Activated T-helper 1 cell treated with anti-CD3 and anti-CD28 coated beads, Interleukin-12 subunit alpha, Interleukin-12 subunit beta, Interleukin-2, Interleukin-4 antibody, amounts not matched to agents 30 ng/mL and 10 ng/mL and 1 ng/mL, durations not matched to agents 14 hours and 24 hours and 36 hours (primary cell): ENCODE measurements at regions of chr19 and their contacts with region 1.

Region 1: DNA sequence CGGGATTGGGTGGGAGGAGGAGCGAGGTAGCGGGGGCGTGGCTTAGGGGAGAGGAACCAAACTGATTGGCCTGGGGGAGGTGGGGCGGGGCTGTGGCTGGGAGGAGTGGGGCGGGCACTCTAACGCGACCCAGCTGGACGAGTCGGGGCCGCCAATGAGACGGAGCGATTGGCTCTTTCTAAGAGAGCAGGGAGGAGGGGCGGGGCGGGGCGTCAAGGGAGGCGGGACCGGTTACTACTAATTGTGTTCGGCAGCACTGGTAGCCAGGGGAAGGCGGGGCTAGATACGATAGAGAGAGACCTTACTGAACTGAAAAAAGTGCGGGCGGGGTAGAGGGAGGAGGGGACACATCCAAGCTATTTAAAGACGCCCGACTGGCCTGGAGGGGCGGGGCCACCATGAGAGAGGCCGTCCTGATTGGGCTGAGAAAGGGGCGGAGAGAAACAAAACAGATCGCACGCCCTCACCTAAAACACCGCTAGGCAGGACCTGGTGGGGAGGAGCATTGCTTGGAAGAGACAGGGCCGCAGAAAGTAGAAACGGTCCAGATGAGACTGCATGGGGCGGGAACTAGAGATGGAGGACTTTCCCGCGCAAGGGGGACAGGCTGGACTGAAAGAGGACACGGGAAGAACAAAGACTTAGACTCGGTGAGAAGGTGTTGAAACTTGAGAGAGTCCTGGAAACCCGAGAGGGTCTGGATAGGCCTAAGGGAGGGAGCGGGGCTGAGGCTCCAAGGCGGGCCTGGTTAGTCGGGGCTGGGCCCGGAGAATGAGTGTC is at the start of gene KCNC3:
- DNase-seq: peak; percentile 96
- H3K4me3 Mint-ChIP-seq: peak within 1 kb of the TSS; percentile 84
- H3K27ac Mint-ChIP-seq: peak within 1 kb of the TSS; percentile 89
- H3K4me1 Mint-ChIP-seq: peaks cover 72% of the 10 kb centered on the region
- H3K27me3 Mint-ChIP-seq: peaks cover 16% of the 10 kb centered on the region
- total RNA-seq, gene KCNC3: 23.7 and 24.0 TPM in 2 replicates

Region 2: DNA sequence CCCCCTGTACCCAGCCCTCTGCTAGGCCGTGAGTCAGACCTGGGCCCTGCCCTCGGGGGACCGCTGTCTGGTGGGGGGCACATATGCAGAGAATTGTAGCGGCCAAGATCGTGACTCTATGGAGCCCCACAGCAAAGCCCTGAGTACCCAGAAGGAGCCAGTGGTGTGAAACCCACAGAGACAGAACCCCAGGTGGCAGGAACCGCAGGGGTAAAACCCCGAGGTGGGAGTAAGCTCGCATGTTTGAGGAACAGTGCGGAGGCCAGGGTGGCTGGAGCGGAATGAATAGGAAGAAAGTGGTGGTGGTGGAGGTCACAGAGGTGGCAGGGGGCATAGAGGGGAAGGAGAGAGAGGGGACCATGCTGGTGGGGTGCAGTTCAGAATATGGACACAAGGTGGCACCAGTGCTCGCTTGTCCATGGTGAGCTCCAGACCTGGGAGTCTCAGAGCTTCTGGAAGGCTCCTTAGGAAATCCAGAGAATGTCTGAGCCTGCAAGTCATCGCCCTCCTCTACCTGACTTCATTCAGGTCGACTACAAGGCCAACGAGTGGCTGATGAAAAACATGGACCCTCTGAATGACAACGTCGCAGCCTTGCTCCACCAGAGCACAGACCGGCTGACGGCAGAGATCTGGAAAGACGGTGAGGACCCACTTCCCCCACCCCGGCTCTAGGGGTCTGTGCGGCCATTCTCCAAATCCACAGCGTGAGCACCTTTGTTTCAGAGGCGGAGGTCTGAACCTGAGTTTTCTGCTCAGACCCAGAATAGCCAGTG is 77.0 kb before region 1 on chr19:
- intact Hi-C with region 1: loop called (anchors 5 kb)
- DNase-seq: no peak
- H3K4me3 Mint-ChIP-seq: no peak overlapping the region
- H3K27ac Mint-ChIP-seq: no peak overlapping the region
- H3K4me1 Mint-ChIP-seq: no peaks in the 10 kb centered on the region
- H3K27me3 Mint-ChIP-seq: no peaks in the 10 kb centered on the region

Region 3: GRCh38 chr19:50357178-50358100 is 28.1 kb after region 1 on chr19:
- intact Hi-C with region 1: loop called (anchors 1 kb)
- DNase-seq: peak; percentile 86
- H3K4me3 Mint-ChIP-seq: peak overlapping the region; percentile 90
- H3K27ac Mint-ChIP-seq: peak overlapping the region; percentile 99
- H3K4me1 Mint-ChIP-seq: peaks cover 52% of the 10 kb centered on the region
- H3K27me3 Mint-ChIP-seq: no peaks in the 10 kb centered on the region

Region 4: DNA sequence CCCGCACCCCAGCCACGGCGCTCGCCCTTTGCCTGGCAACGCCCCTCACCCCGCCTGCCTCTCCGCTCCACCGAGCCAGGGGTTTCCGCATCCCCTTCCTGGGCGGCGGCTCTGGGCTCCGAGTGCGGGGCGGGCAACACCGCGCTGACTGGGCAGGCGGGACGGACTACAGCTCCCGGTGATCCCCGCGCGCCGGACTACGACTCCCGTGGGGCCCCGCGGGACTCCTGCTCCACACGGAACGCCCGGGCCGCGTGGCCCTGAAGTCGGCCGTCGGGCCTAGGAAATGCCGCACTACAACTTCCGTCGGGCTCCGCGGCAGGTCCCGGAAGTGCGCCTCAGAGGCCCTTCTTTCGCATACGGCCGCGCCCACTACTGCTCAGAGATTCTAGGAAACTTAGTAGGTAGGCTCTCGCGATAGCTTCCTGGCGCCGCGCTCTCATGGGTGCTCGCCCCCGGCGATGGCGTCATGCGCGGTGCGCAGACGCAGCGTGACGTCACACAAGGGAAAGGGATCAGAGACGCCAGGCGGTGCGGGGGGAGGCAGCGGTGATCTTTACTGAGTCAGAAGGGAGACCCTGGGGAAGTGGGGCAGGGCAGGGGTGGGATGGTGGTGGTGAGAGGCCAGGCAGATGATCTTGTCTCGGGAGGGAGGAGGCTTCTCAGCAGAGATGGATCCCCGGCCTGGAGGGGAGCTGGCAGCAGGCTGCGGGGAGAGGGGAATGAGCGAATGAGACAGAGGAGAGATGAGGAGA is 181.9 kb after region 1 on chr19 and contains the start of gene JOSD2:
- intact Hi-C with region 1: loop called (anchors 1 kb)
- DNase-seq: peak; percentile 97
- H3K4me3 Mint-ChIP-seq: peak within 1 kb of the TSS; percentile 96
- H3K27ac Mint-ChIP-seq: peak within 1 kb of the TSS; percentile 99
- H3K4me1 Mint-ChIP-seq: peaks cover 18% of the 10 kb centered on the region
- H3K27me3 Mint-ChIP-seq: peaks cover 10% of the 10 kb centered on the region
- total RNA-seq, gene JOSD2: 38.5 and 41.7 TPM in 2 replicates

Region 5: DNA sequence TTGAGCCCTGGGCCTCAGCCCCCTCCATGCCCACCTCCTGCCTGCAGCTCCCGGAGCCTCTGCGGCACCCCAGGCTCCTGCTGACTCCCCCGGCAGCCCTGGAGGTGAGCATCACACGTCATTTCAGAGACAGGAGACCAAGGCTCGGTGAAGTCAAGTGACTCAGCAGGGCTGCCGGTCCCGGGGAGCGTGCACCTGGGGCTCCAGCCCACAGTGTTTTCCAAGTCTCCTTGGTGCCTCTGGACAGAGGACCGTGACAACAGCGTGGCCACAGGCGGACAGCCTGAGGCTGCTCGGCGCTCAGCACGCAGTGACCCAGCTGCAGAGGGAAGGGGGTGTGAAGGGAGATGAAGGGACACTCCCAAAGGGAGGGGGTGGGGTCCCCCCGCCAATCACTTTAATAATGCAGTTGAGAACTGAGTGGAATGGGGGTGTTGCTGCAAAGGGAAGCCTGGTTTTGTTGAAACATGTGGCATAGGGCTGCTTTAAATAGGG is 201.8 kb after region 1 on chr19:
- intact Hi-C with region 1: no loop called
- DNase-seq: no peak
- H3K4me3 Mint-ChIP-seq: no peak overlapping the region
- H3K27ac Mint-ChIP-seq: no peak overlapping the region
- H3K4me1 Mint-ChIP-seq: no peaks in the 10 kb centered on the region
- H3K27me3 Mint-ChIP-seq: no peaks in the 10 kb centered on the region

Region 6: GRCh38 chr19:50804420-50805272 is 475.3 kb after region 1 on chr19:
- intact Hi-C with region 1: loop called (anchors 1 kb)
- DNase-seq: peak; percentile 97
- H3K4me3 Mint-ChIP-seq: peak overlapping the region; percentile 96
- H3K27ac Mint-ChIP-seq: peak overlapping the region; percentile 98
- H3K4me1 Mint-ChIP-seq: peaks cover 27% of the 10 kb centered on the region
- H3K27me3 Mint-ChIP-seq: no peaks in the 10 kb centered on the region